Natural killer cell (primary cell): ENCODE measurements at regions of chr10 and their contacts with region 1.

Region 1: DNA sequence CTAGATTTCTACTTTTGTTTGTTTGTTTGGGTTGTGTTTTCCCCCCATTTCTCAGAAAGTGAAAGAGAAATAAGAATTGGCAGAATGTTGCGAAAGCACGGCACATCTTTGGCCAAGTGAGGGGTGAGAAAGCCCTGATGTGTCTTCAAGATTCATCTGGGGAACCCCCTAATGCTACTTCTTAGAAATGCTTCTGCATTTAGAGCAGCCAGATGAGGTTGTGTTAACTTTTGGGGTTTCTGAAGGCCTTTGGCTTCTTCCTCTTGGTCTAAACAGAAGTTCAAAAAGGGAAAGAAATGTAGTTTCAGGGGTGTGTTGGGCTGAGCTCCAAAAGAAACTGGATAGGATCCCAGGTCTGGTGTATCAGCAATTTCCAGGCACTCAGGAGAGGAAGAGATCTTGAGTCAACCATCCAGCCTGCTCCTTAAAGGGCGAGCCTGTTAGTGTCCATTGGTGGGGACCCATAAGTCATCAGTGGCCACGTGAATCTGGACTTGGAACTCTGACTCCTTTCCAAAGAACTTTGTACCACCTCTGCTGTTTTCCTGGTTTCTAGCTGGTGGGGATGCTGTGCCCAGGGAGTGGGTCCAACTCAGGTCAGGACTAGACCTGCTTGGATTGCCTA is 6.5 kb downstream of the DUSP5 start:
- DNase-seq: peak; percentile 51 to 86
- ATAC-seq: peak; percentile 90 to 94 (median 93)
- H3K4me3 ChIP-seq: no peak overlapping the region
- H3K4me3 Mint-ChIP-seq: peak overlapping the region; percentile 76
- H3K27ac ChIP-seq: peak overlapping the region; percentile 95
- H3K27ac Mint-ChIP-seq: peak overlapping the region; percentile 96
- H3K4me1 ChIP-seq: peaks cover 59% of the 10 kb centered on the region
- H3K4me1 Mint-ChIP-seq: peaks cover 64 to 79% of the 10 kb centered on the region in 2 donors
- H3K27me3 ChIP-seq: no peaks in the 10 kb centered on the region
- H3K27me3 Mint-ChIP-seq: no peaks in the 10 kb centered on the region
- CTCF ChIP-seq: no peak

Region 2: GRCh38 chr10:110354322-110354766 is 149.9 kb before region 1 on chr10:
- intact Hi-C with region 1: loop called (anchors 1 kb)
- DNase-seq: peak; percentile 76 to 87
- ATAC-seq: peak; percentile 76 to 91 (median 86)
- H3K4me3 ChIP-seq: no peak overlapping the region
- H3K4me3 Mint-ChIP-seq: no peak overlapping the region
- H3K27ac ChIP-seq: no peak overlapping the region
- H3K27ac Mint-ChIP-seq: peak overlapping the region in 1 of 2 donors; percentile 29
- H3K4me1 ChIP-seq: peaks cover 52% of the 10 kb centered on the region
- H3K4me1 Mint-ChIP-seq: peaks cover 13 to 21% of the 10 kb centered on the region in 2 donors
- H3K27me3 ChIP-seq: no peaks in the 10 kb centered on the region
- H3K27me3 Mint-ChIP-seq: peaks cover 8 to 13% of the 10 kb centered on the region in 2 donors
- CTCF ChIP-seq: peak; percentile 93

Region 3: DNA sequence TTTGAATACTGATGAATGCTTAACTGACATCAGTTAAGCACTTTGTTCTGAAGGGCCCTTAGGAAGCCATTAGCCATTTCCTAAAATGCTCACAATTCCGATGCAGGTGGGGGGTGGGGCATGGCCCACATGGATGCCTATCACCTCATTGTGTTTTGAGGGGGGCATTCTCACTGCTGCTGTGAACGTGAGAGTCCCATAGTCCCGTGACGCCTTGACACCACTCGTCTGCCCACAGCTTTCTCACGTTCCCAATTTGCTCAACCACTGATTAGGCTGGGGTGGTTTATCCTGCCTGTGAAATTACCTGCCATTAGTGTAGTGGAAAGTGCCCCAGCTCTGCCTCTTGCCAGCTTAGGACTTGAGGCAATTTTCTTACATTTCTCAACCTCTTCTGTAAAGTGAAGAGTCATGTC is 25.4 kb after region 1 on chr10:
- intact Hi-C with region 1: loop called (anchors 1 kb)
- DNase-seq: peak; percentile 31 to 74
- ATAC-seq: peak; percentile 65 to 90 (median 69)
- H3K4me3 ChIP-seq: no peak overlapping the region
- H3K4me3 Mint-ChIP-seq: peak overlapping the region; percentile 72
- H3K27ac ChIP-seq: no peak overlapping the region
- H3K27ac Mint-ChIP-seq: peak overlapping the region; percentile 43 to 54
- H3K4me1 ChIP-seq: peaks cover 24% of the 10 kb centered on the region
- H3K4me1 Mint-ChIP-seq: peaks cover 27 to 33% of the 10 kb centered on the region in 2 donors
- H3K27me3 ChIP-seq: no peaks in the 10 kb centered on the region
- H3K27me3 Mint-ChIP-seq: peaks cover 0 to 5% of the 10 kb centered on the region in 2 donors
- CTCF ChIP-seq: no peak

Region 4: DNA sequence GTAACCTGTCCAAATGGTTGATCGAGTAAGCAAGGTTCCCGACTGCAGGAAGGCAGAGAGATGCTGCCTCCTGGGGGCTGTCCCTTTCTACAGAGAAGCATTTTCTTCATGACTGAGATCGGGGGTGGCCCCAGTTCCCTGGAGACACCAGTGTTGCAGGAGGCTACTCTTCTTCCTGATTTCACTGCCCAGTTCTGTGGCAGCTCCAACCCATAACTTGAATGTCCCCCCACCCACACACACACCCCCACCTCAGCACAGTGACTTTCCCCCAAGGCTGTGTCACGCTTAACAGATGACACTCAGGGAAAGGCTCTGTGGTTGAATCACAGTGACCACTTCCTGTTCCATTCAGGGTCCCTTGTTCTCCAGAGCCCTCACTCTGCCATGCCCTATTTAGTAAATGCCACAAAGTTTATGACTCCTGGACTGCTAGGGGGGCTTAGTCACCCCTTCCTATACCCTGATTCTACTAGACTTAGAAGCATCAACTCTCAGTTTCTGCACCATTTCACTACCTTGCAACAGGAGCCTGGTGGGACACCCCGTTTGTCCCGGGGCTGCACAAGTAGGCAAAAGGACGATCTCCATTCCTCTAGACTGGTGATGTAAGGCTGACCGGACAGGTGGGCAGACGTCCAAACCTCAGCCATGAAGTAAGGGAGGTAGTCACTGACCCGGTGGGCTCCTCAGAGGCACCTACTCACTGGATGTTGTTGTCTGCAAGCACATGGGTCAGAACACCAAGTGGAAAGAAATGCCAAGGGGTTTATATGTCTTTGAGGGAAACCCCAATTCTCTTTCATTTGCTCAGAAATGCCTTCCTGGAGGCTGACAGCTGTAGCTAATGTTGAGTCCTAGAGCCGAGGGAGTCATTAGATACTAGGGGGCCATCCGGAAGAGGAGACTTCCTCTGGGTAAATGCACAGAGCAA is 32.0 kb after region 1 on chr10:
- intact Hi-C with region 1: loop called (anchors 2 kb)
- DNase-seq: peak; percentile 30 to 69
- ATAC-seq: peak; percentile 80 to 87 (median 86)
- H3K4me3 ChIP-seq: no peak overlapping the region
- H3K4me3 Mint-ChIP-seq: peak overlapping the region; percentile 45
- H3K27ac ChIP-seq: no peak overlapping the region
- H3K27ac Mint-ChIP-seq: peak overlapping the region in 1 of 2 donors; percentile 78
- H3K4me1 ChIP-seq: peaks cover 21% of the 10 kb centered on the region
- H3K4me1 Mint-ChIP-seq: peaks cover 19 to 24% of the 10 kb centered on the region in 2 donors
- H3K27me3 ChIP-seq: no peaks in the 10 kb centered on the region
- H3K27me3 Mint-ChIP-seq: peaks cover 0 to 5% of the 10 kb centered on the region in 2 donors
- CTCF ChIP-seq: peak; percentile 26

Region 5: DNA sequence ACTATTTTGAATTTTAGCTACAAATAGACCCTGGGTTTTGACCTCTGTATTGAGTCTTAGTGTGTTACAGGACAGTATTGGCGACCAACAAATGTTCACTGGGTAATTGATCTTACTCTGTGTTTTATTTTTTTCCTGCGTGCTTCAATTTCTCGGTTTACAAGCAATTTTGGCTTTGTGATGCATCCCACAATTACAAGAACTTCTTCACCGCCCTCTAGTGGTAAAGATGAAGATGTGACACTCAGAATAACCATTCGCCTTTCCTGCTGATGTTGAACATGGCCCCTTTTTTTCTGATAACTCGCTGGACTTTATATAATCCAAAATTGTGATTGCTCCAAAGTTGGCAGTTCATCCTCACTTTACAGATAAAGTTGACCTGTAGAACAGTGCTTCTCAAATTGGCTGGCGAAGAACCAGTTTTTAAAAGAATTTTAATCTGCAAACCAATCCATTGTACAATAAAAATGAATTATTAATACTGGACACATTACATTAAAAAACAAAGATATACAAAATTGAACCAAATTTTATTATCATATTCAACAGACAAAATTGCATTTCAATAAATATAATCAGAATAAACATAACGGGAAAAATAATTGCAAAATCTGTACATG is 43.0 kb after region 1 on chr10:
- intact Hi-C with region 1: no loop called
- DNase-seq: peak in 1 of 2 donors; percentile 79
- ATAC-seq: peak; percentile 71 to 91 (median 78)
- H3K4me3 ChIP-seq: no peak overlapping the region
- H3K4me3 Mint-ChIP-seq: no peak overlapping the region
- H3K27ac ChIP-seq: no peak overlapping the region
- H3K27ac Mint-ChIP-seq: no peak overlapping the region
- H3K4me1 ChIP-seq: no peaks in the 10 kb centered on the region
- H3K4me1 Mint-ChIP-seq: peaks cover 4 to 8% of the 10 kb centered on the region in 2 donors
- H3K27me3 ChIP-seq: peaks cover 5% of the 10 kb centered on the region
- H3K27me3 Mint-ChIP-seq: peaks cover 6 to 42% of the 10 kb centered on the region in 2 donors
- CTCF ChIP-seq: peak; percentile 90

Region 6: GRCh38 chr10:110567201-110568054 is 63.2 kb after region 1 on chr10 and contains the start of gene SMC3:
- intact Hi-C with region 1: loop called (anchors 1 kb)
- DNase-seq: peak; percentile 90 to 95
- ATAC-seq: peak; percentile 86 to 94 (median 87)
- H3K4me3 ChIP-seq: peak within 1 kb of the TSS; percentile 64
- H3K4me3 Mint-ChIP-seq: peak within 1 kb of the TSS; percentile 94
- H3K27ac ChIP-seq: peak within 1 kb of the TSS; percentile 75
- H3K27ac Mint-ChIP-seq: peak within 1 kb of the TSS; percentile 96 to 99
- H3K4me1 ChIP-seq: peaks cover 12% of the 10 kb centered on the region
- H3K4me1 Mint-ChIP-seq: peaks cover 40 to 41% of the 10 kb centered on the region in 2 donors
- H3K27me3 ChIP-seq: no peaks in the 10 kb centered on the region
- H3K27me3 Mint-ChIP-seq: peaks cover 13 to 16% of the 10 kb centered on the region in 2 donors
- CTCF ChIP-seq: no peak
- total RNA-seq, gene SMC3: 36.6 to 38.5 (median 37.8) TPM

Region 7: DNA sequence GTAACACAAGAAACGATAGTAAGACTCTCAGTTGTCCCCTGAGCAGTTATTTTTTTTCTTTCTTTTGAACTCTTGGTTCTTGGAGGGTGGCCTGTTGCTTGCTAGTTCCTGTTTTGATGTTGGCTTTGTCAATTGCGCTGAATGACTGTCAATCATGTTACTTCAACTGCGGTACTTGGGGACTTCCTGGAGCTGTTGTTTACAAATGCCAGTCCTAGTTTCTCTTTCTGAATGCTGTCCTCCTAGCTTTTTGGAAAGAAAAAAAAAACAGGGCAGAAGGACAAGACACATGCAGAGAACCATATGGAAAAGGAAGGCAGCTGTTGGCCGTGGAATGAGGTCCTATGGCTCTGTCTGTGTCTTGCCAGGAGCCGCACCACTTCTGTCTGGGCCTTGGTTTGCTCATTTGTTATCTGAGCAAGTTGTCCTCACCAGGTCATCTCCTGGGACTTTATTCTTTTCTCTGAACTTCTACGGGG is 360.5 kb after region 1 on chr10:
- intact Hi-C with region 1: loop called (anchors 2 kb)
- DNase-seq: peak; percentile 23 to 93
- ATAC-seq: peak; percentile 78 to 89 (median 82)
- H3K4me3 ChIP-seq: peak overlapping the region; percentile 3
- H3K4me3 Mint-ChIP-seq: peak overlapping the region; percentile 87
- H3K27ac ChIP-seq: peak overlapping the region; percentile 92
- H3K27ac Mint-ChIP-seq: peak overlapping the region; percentile 96 to 98
- H3K4me1 ChIP-seq: peaks cover 82% of the 10 kb centered on the region
- H3K4me1 Mint-ChIP-seq: peaks cover 91 to 96% of the 10 kb centered on the region in 2 donors
- H3K27me3 ChIP-seq: no peaks in the 10 kb centered on the region
- H3K27me3 Mint-ChIP-seq: no peaks in the 10 kb centered on the region
- CTCF ChIP-seq: no peak

Region 8: DNA sequence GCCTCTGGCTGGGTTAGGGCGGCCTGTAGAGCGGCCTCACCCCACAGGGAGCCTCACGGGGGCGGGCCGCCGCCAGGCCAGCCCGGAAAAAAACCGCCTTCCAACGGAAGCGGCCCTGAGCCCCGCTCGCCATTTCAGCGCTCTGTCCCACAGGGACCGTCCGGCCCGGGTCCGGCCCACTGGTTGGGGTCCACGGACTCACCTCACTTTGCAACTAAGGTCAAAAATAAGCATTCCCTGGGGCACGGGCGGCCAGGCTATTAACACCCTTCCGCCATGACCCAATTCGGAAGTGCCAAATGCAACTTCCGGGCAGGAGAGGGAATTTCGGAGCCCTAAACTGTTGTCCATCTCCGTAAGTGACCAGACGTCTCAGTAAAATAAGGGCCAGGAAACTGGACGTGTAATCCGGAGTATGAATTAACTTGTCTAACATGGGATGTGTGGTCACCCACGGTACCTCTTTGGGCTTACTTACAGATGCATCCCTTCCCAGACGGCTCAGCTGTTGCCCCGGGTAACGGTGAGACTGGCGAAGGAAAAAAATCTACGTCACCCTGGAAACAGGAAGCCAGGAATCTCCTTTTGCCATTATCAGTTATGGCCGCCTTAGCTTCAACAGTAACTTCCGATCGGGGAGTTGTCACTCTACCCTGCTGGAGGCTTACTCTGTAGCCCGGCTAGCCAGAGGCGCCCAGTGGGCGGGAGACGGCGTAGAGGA is 414.6 kb after region 1 on chr10 and contains the start of gene BBIP1:
- intact Hi-C with region 1: no loop called
- DNase-seq: peak; percentile 81 to 99
- ATAC-seq: peak; percentile 88 to 98 (median 90)
- H3K4me3 ChIP-seq: peak within 1 kb of the TSS; percentile 86
- H3K4me3 Mint-ChIP-seq: peak within 1 kb of the TSS; percentile 97
- H3K27ac ChIP-seq: peak within 1 kb of the TSS; percentile 98
- H3K27ac Mint-ChIP-seq: peak within 1 kb of the TSS; percentile 99 to 100
- H3K4me1 ChIP-seq: peaks cover 7% of the 10 kb centered on the region
- H3K4me1 Mint-ChIP-seq: peaks cover 33 to 46% of the 10 kb centered on the region in 2 donors
- H3K27me3 ChIP-seq: no peaks in the 10 kb centered on the region
- H3K27me3 Mint-ChIP-seq: no peaks in the 10 kb centered on the region
- CTCF ChIP-seq: no peak
- total RNA-seq, gene BBIP1: 27.2 to 58.6 (median 27.7) TPM